Activated naive CD4-positive, alpha-beta T cell treated with anti-CD3 and anti-CD28 coated beads for 36 hours (primary cell): ENCODE measurements at regions of chr3 and their contacts with region 1.

Region 1: DNA sequence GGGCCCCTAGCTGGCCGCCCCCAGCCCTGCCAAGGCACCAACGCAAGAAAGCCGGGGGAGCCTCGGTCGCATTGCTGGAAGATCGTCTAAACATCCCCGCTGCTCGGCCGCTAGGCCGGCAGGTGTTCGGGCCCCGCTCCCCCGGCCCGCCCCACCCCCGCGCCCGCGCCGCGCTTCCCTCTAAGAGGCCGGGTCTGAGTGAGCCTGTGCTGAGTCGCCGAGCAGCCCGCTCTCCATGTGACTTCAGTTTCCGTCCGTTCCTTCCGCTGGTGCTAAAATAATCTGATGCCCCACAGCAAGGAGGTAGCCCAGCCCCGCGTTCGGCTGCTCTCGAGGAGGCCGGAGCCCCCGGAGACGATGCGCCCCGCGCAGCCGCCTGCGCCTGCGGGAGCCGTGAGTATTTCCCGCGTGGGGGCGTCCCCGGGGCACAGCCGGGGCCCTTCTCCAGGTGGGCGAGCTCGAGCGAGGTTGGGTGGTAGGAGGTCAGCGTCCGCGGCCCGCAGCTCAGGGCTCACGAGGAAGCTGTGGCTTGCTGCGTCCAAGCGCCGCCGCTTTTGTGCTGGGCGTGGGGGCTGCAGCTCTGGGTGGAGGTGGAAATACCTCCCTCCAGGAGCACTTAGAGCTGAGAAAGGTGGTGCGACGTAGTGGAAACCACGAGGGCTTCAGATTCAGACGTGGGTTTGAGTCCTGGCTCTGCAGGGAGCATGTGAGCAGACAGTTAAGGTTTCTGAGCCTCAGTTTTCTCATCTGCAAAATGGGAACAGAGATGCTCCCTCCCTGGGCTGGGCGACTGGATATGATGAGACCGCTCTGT is at the start of gene NRROS:
- DNase-seq: peak; percentile 77
- H3K4me3 Mint-ChIP-seq: peak within 1 kb of the TSS; percentile 80
- H3K27ac Mint-ChIP-seq: peak within 1 kb of the TSS; percentile 82
- H3K4me1 Mint-ChIP-seq: peaks cover 45% of the 10 kb centered on the region
- H3K27me3 Mint-ChIP-seq: no peaks in the 10 kb centered on the region
- total RNA-seq, gene NRROS: 8.1 to 9.2 TPM

Region 2: DNA sequence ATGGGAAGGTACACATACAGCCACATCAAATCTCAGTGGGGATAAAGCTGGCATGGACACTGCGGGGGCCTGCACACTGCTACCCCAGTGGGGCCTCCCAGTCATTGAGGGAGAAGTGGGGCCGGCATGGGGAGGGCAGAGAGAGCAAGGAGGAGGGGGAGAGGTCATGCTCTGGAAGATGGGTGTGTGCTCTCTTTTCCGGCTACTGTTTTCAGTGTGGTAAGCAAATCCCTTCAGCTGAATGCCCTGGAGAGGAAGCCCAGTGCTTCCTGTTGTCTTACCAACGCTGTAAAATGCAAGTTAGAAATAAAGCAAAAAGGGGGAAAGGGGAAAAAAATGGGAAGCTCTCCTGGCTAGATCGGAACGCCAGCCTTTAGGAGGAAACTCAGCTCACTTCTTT is 30.6 kb after region 1 on chr3:
- CTCF ChIA-PET with region 1: interaction called, 4 read pairs
- intact Hi-C with region 1: loop called (anchors 2 kb)
- DNase-seq: no peak
- H3K4me3 Mint-ChIP-seq: peak overlapping the region; percentile 17
- H3K27ac Mint-ChIP-seq: peak overlapping the region; percentile 47
- H3K4me1 Mint-ChIP-seq: peaks cover 18% of the 10 kb centered on the region
- H3K27me3 Mint-ChIP-seq: no peaks in the 10 kb centered on the region